Activated B cell treated with CpG ODN at 0.5 μM for 24 hours (primary cell): ENCODE measurements at regions of chr6 and their contacts with region 1.

Region 1: GRCh38 chr6:169990095-169991030 is 238.9 kb downstream of the ERMARD start:
- DNase-seq: peak; percentile 16
- ATAC-seq: peak; percentile 54
- H3K4me3 Mint-ChIP-seq: peak overlapping the region; percentile 73
- H3K27ac Mint-ChIP-seq: peak overlapping the region; percentile 37
- H3K4me1 Mint-ChIP-seq: peaks cover 27% of the 10 kb centered on the region
- H3K27me3 Mint-ChIP-seq: peaks cover 4% of the 10 kb centered on the region
- CTCF ChIP-seq: no peak

Region 2: DNA sequence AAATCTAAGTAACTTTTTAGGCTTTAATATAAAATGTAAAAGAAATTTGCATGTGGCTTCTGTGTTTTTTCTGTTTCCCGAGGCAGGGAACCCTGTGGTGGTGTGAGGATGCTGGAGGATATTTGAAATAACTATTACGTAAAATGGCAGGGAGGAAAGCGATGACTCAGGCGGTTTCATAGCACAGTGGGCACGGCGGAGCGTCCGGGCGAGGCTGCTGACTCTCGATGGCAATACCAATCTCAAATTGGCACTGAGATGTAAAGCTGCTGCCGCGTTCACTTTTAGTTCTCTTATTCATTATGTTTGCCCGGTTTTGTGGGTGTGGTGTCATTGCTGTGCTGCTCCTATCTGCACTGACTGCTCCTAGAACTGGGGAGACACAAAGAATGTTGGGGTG is 991.0 kb before region 1 on chr6:
- CTCF ChIA-PET with region 1: no interaction called
- POLR2A ChIA-PET with region 1: no interaction called
- intact Hi-C with region 1: no loop called
- DNase-seq: no peak
- ATAC-seq: no peak
- H3K4me3 Mint-ChIP-seq: no peak overlapping the region
- H3K27ac Mint-ChIP-seq: no peak overlapping the region
- H3K4me1 Mint-ChIP-seq: no peaks in the 10 kb centered on the region
- H3K27me3 Mint-ChIP-seq: no peaks in the 10 kb centered on the region
- CTCF ChIP-seq: no peak

Region 3: DNA sequence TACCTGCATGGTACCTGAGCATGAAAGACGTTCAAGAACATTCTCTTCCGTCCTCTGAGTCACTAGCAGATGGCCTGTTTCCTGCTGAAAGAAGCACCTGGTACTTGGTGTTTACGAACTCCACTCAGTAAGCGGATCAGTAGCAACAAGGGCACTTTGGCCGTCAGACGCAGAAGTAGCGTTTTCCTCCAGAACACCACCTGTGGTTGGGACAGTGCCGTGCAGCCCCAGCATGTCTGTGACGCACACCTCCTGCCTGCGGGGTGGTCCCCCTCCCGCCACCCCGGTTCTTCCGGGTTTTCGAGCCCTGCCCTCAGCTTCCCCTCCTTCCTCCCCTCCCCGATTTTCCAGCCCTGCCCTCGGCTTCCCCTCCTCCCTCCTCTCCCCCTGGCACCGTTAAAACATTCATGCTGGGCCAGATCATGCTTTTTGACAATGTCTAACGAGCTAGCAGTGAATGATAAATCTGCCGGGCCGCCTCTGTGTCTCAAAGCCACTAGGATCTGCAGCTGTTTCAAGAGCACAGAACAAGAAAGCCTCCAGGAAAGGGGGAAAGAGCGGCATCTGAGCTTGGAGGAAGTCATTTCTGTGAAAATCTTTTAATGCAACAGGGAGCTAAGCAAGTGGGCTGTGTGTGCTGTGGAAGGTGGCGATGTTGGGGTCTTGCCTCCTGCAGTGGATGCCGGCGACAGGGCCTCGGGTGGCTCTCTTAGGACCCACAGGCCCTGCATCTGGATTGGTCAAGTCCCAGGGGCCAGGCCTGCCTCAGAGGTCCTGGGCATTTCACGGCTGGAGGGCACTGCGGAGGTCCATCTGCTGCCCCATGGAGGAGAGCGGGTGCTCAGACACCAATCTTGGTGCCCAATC is 31.0 kb before region 1 on chr6:
- CTCF ChIA-PET with region 1: no interaction called
- POLR2A ChIA-PET with region 1: no interaction called
- intact Hi-C with region 1: loop called (anchors 2 kb)
- DNase-seq: peak; percentile 33
- ATAC-seq: peak; percentile 91
- H3K4me3 Mint-ChIP-seq: peak overlapping the region; percentile 64
- H3K27ac Mint-ChIP-seq: peak overlapping the region; percentile 76
- H3K4me1 Mint-ChIP-seq: peaks cover 23% of the 10 kb centered on the region
- H3K27me3 Mint-ChIP-seq: peaks cover 18% of the 10 kb centered on the region
- CTCF ChIP-seq: no peak

Region 4: DNA sequence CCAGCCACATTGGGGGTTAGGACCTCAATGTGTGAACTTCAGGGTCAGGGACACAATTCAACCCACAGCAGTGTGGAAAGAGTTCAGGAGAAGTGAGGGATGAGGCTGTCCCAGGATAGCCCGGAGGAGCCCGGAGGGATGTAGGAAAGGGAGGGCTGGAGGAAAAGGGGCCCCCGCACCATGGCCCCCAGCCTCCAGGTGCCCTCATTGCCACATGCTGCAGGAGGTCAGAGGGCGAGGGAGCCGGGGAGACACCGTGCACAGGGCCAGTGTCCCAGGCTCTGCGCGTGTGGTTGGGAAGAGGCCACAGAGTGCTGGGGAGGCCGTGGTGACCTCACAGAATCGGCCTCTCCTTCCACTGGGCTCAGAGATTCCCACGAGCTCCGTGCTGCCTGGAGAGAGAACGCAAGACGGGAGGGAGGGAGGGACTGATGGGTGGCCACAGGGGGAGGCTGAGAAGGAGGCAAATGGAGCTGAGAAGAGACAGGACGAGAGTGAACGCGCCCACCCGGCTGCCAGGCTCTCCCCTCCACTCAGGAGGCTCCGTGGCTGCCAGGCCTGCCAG is 85.4 kb after region 1 on chr6:
- CTCF ChIA-PET with region 1: no interaction called
- POLR2A ChIA-PET with region 1: no interaction called
- intact Hi-C with region 1: no loop called
- DNase-seq: no peak
- ATAC-seq: no peak
- H3K4me3 Mint-ChIP-seq: no peak overlapping the region
- H3K27ac Mint-ChIP-seq: no peak overlapping the region
- H3K4me1 Mint-ChIP-seq: no peaks in the 10 kb centered on the region
- H3K27me3 Mint-ChIP-seq: peaks cover 4% of the 10 kb centered on the region
- CTCF ChIP-seq: no peak